Esophagus muscularis mucosa (tissue), 4 donors: ENCODE measurements at regions of chr19 and their contacts with region 1.

Region 1: GRCh38 chr19:36796076-36796992 is 23.7 kb upstream of the ZNF850 start:
- DNase-seq: no peak
- H3K4me3 ChIP-seq: peak overlapping the region; percentile 69 to 82 (median 74)
- H3K27ac ChIP-seq: peak overlapping the region; percentile 74 to 90 (median 77)
- H3K4me1 ChIP-seq: peaks cover 5 to 25% (median 17%) of the 10 kb centered on the region in 4 donors
- H3K27me3 ChIP-seq: no peaks in the 10 kb centered on the region
- CTCF ChIP-seq: no peak
- EP300 ChIP-seq: no peak
- POLR2A ChIP-seq: no peak

Region 2: GRCh38 chr19:36707134-36707533 is 89.2 kb before region 1 on chr19:
- intact Hi-C with region 1: no loop called
- DNase-seq: no peak
- H3K4me3 ChIP-seq: no peak overlapping the region
- H3K27ac ChIP-seq: no peak overlapping the region
- H3K4me1 ChIP-seq: no peaks in the 10 kb centered on the region
- H3K27me3 ChIP-seq: no peaks in the 10 kb centered on the region
- CTCF ChIP-seq: no peak
- EP300 ChIP-seq: no peak
- POLR2A ChIP-seq: no peak

Region 3: GRCh38 chr19:36745870-36746269 is 50.5 kb before region 1 on chr19:
- intact Hi-C with region 1: no loop called
- DNase-seq: no peak
- H3K4me3 ChIP-seq: no peak overlapping the region
- H3K27ac ChIP-seq: no peak overlapping the region
- H3K4me1 ChIP-seq: no peaks in the 10 kb centered on the region
- H3K27me3 ChIP-seq: no peaks in the 10 kb centered on the region
- CTCF ChIP-seq: no peak
- EP300 ChIP-seq: no peak
- POLR2A ChIP-seq: no peak

Region 4: DNA sequence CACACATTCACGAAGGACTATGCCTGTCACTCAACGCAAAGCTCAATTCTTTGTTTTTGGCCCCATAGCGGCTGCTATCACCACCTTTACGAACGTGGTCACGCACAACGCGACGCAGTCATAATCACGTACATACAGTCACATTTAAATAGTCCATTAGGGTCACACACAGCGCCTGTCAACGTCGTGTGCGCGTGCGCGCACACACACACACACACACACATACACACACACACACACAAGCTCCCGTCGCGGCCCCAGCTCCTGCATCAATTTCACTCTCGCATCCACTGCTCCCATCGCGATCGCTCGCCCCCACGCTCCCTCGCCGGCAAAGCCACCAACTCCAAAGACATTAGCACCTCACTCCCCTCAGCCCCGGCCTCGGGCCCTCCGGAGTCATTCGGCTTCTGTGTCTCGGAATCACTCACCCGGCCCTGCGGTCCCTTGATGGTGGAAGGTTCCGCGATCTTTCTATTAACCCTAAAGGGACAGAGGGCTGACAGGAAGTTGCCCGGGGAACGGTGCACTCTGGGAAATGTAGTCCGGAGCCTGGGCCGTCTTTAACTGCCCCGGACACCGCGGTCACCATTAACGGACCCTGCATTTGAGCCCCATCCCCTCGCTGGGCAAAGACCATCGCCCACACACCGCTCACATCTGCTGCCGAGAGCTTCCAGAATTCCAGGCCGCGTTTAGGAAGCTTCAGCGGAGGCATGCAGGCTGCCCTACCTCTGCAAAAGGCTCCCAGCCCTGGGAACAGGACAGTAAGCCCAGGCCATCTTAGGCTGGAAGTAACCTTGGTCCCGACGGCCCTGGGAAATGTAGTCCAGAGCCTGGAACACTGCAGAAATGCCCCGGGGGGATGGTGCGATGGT is 41.8 kb after region 1 on chr19 and contains the start of gene ZNF790:
- intact Hi-C with region 1: loop called (anchors 5 kb)
- DNase-seq: peak; percentile 98
- H3K4me3 ChIP-seq: peak within 1 kb of the TSS; percentile 62 to 88 (median 80)
- H3K27ac ChIP-seq: peak within 1 kb of the TSS; percentile 85 to 90 (median 88)
- H3K4me1 ChIP-seq: peaks cover 19 to 25% (median 19%) of the 10 kb centered on the region in 4 donors
- H3K27me3 ChIP-seq: no peaks in the 10 kb centered on the region
- CTCF ChIP-seq: no peak
- EP300 ChIP-seq: no peak
- POLR2A ChIP-seq: no peak
- total RNA-seq, gene ZNF790: 5.8 to 11.1 (median 7.8) TPM

Region 5: DNA sequence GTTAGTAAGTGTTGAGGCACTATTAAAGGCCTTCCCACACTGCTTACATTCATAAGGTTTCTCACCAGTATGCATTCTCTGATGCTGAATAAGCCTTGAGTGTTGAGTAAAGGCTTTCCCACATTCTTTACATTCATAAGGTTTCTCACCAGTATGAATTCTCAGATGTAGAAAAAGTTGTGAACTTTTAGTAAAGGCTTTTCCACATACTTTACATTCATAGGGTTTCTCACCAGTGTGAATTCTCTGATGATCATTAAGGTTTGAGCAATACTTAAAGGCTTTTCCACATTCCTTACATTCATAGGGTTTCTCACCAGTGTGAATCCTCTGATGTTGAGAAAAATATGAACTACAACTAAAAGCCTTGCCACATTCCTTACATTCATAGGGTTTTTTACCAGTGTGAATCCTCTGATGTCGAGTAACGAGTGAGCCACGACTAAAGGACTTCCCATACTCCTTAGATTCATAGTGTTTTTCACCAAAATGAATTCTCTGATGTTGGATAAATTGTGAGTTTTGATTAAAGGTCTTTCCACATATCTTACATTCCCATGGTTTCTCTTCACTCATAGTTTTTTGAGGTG is 95.5 kb after region 1 on chr19:
- intact Hi-C with region 1: no loop called
- DNase-seq: no peak
- H3K4me3 ChIP-seq: peak overlapping the region in 1 of 4 donors; percentile 4
- H3K27ac ChIP-seq: no peak overlapping the region
- H3K4me1 ChIP-seq: no peaks in the 10 kb centered on the region
- H3K27me3 ChIP-seq: no peaks in the 10 kb centered on the region
- CTCF ChIP-seq: no peak
- EP300 ChIP-seq: no peak
- POLR2A ChIP-seq: no peak

Region 6: GRCh38 chr19:37594304-37594981 is 798.1 kb after region 1 on chr19 and contains the starts of genes ZNF540 and ZNF571:
- intact Hi-C with region 1: loop called (anchors 5 kb)
- DNase-seq: peak; percentile 99
- H3K4me3 ChIP-seq: peak within 1 kb of the TSS; percentile 70 to 83 (median 73)
- H3K27ac ChIP-seq: peak within 1 kb of the TSS; percentile 90 to 93 (median 92)
- H3K4me1 ChIP-seq: peaks cover 12 to 26% (median 23%) of the 10 kb centered on the region in 4 donors
- H3K27me3 ChIP-seq: no peaks in the 10 kb centered on the region
- CTCF ChIP-seq: peak in 1 of 3 experiments; percentile 10
- EP300 ChIP-seq: no peak
- POLR2A ChIP-seq: no peak
- total RNA-seq, gene ZNF540: 1.6 to 5.4 (median 2.5) TPM
- total RNA-seq, gene ZNF571: 2.8 to 4.7 (median 4.3) TPM

Region 7: DNA sequence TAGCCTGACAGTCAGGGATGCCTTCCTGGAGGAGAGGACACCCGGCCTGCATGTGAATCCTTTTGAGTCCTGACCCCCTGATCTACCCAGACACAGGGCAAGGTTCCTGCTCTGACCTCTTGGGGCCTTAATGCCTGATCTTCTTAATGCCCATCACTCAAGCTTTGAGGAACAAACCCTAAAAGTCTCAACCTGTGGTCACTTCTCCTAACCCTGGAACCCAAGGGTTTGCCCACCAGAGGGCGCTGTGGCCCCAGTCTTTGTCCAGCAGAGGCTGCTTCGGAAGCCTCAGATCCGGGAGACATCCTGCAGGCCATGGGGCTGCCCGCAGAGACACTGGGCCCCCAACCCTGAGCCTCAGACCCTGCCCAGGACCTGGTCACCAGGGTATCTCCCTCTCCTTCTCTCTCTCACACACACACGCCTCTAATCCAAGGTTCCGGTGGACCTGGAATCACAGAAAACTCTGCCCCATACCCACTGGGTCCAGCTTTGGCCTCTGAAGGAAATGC is 1437.5 kb after region 1 on chr19:
- intact Hi-C with region 1: no loop called
- DNase-seq: no peak
- H3K4me3 ChIP-seq: no peak overlapping the region
- H3K27ac ChIP-seq: no peak overlapping the region
- H3K4me1 ChIP-seq: peaks cover 5 to 12% (median 10%) of the 10 kb centered on the region in 4 donors
- H3K27me3 ChIP-seq: peaks cover 9 to 92% (median 19%) of the 10 kb centered on the region in 4 donors
- CTCF ChIP-seq: peak; percentile 61 to 81 (median 66)
- EP300 ChIP-seq: no peak
- POLR2A ChIP-seq: no peak